Endothelial cell of umbilical vein (primary cell): ENCODE measurements at regions of chr2 and their contacts with region 1.

Region 1: DNA sequence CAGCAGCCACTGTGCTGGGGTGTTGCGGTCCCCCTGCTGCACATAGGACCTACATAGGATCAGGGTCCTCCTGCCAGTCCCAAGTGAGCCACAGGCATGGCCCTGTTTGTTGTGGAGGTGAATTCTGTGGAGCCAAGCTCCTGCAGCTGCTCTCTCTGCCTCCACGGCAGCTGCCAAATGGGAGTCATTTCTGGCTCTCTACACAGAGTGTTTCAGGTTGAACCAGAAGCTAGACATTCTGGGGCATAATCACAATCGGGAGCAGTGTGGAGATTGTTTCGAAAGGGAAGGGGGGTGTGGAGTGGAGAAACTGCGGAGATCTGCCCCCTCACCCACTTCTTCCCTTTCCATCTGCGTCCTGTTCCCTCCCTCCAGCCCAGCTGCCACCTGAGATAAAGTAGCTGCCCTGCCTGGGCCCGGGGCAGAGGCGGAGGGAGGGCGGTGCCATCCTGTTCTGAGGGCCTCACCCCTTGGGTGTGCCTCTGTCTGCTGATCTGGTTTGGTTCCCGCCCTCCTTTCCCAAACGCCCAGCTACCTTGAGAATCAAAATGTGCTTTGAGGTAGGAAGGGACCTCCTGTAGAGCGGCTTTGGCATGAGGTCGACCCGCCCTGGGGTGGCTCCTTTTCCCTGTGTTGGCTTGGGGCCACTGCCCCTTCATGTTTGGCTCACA is 139.4 kb downstream of the WDSUB1 start:
- DNase-seq: peak; percentile 72
- H3K4me3 ChIP-seq: no peak overlapping the region
- H3K27ac ChIP-seq: peak overlapping the region; percentile 13
- H3K4me1 ChIP-seq: peaks cover 41% of the 10 kb centered on the region
- H3K27me3 ChIP-seq: no peaks in the 10 kb centered on the region
- CTCF ChIP-seq: no peak
- POLR2A ChIP-seq: no peak

Region 2: GRCh38 chr2:158783923-158784322 is 363.2 kb before region 1 on chr2:
- CTCF ChIA-PET with region 1: no interaction called
- POLR2A ChIA-PET with region 1: no interaction called
- dilution Hi-C with region 1: no loop called
- intact Hi-C with region 1: no loop called
- DNase-seq: no peak
- H3K4me3 ChIP-seq: no peak overlapping the region
- H3K27ac ChIP-seq: no peak overlapping the region
- H3K4me1 ChIP-seq: no peaks in the 10 kb centered on the region
- H3K27me3 ChIP-seq: peaks cover 4 to 7% of the 10 kb centered on the region in 2 experiments
- CTCF ChIP-seq: no peak
- POLR2A ChIP-seq: no peak

Region 3: GRCh38 chr2:159124441-159124911 is 22.7 kb before region 1 on chr2:
- CTCF ChIA-PET with region 1: interaction called, 8 read pairs
- POLR2A ChIA-PET with region 1: interaction called, 4 read pairs
- dilution Hi-C with region 1: no loop called
- intact Hi-C with region 1: loop called (anchors 1 kb)
- DNase-seq: peak; percentile 92
- H3K4me3 ChIP-seq: no peak overlapping the region
- H3K27ac ChIP-seq: peak overlapping the region; percentile 84
- H3K4me1 ChIP-seq: peaks cover 35% of the 10 kb centered on the region
- H3K27me3 ChIP-seq: no peaks in the 10 kb centered on the region
- CTCF ChIP-seq: no peak
- POLR2A ChIP-seq: peak; percentile 52

Region 4: DNA sequence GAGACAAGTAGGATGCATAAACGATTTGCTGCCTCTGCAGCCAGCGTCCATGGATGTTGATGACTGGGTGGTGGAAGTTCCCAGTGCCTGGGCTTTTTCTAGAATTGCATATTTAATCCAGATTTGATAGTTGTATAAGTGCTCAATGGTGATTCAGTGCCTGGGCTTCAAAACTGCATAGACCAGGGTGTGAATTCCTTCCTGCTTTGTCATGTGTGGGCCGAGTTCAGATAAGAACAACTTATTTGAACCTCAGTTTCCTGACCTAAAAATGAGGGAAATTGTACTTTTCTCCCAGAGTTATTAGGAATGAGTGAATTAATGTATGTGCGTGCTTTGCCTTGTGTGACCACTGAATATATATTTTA is 15.2 kb before region 1 on chr2:
- CTCF ChIA-PET with region 1: interaction called, 65 read pairs
- POLR2A ChIA-PET with region 1: interaction called, 4 read pairs
- dilution Hi-C with region 1: no loop called
- intact Hi-C with region 1: loop called (anchors 1 kb)
- DNase-seq: peak; percentile 91
- H3K4me3 ChIP-seq: no peak overlapping the region
- H3K27ac ChIP-seq: peak overlapping the region; percentile 80
- H3K4me1 ChIP-seq: peaks cover 69% of the 10 kb centered on the region
- H3K27me3 ChIP-seq: no peaks in the 10 kb centered on the region
- CTCF ChIP-seq: no peak
- POLR2A ChIP-seq: peak; percentile 51